Caco-2 (cell line): ENCODE measurements at regions of chr5 and their contacts with region 1.

Region 1: GRCh38 chr5:5492087-5492933 is 69.8 kb downstream of the ICE1 start:
- DNase-seq: peak; percentile 46 to 49
- H3K4me3 ChIP-seq: no peak overlapping the region
- H3K4me3 Mint-ChIP-seq: no peak overlapping the region
- H3K27ac Mint-ChIP-seq: no peak overlapping the region
- H3K4me1 ChIP-seq: no peaks in the 10 kb centered on the region
- H3K4me1 Mint-ChIP-seq: no peaks in the 10 kb centered on the region
- H3K27me3 ChIP-seq: no peaks in the 10 kb centered on the region
- H3K27me3 Mint-ChIP-seq: no peaks in the 10 kb centered on the region
- CTCF ChIP-seq: peak; percentile 59 to 77

Region 2: GRCh38 chr5:5523066-5523505 is 30.8 kb after region 1 on chr5:
- CTCF ChIA-PET with region 1: no interaction called
- POLR2A ChIA-PET with region 1: no interaction called
- intact Hi-C with region 1: no loop called
- DNase-seq: peak in 1 of 2 experiments; percentile 25
- H3K4me3 ChIP-seq: no peak overlapping the region
- H3K4me3 Mint-ChIP-seq: no peak overlapping the region
- H3K27ac Mint-ChIP-seq: peak overlapping the region; percentile 70
- H3K4me1 ChIP-seq: peaks cover 19% of the 10 kb centered on the region
- H3K4me1 Mint-ChIP-seq: peaks cover 16% of the 10 kb centered on the region
- H3K27me3 ChIP-seq: no peaks in the 10 kb centered on the region
- H3K27me3 Mint-ChIP-seq: no peaks in the 10 kb centered on the region
- CTCF ChIP-seq: no peak

Region 3: DNA sequence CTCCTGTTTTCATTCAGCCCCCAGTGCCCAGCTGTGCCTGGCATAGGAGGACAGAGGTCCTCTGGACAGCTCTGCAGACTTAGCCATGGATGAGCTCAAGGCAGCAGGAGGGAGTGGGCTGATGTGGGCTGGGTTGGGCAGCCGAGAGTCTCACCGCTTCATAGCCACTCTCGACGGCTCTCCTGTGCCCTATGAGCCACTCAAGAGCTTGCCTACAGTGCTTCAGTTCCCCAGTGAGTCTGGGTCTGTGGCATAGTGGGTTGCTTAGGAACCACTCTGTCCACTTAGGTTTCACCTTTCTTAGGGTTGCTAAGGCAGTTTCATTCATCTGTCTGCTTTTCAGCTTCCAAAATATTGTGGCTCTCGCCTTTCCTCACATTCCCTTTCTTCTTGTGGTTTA is 227.0 kb after region 1 on chr5:
- CTCF ChIA-PET with region 1: no interaction called
- POLR2A ChIA-PET with region 1: no interaction called
- intact Hi-C with region 1: loop called (anchors 10 kb)
- DNase-seq: no peak
- H3K4me3 ChIP-seq: no peak overlapping the region
- H3K4me3 Mint-ChIP-seq: no peak overlapping the region
- H3K27ac Mint-ChIP-seq: no peak overlapping the region
- H3K4me1 ChIP-seq: no peaks in the 10 kb centered on the region
- H3K4me1 Mint-ChIP-seq: no peaks in the 10 kb centered on the region
- H3K27me3 ChIP-seq: no peaks in the 10 kb centered on the region
- H3K27me3 Mint-ChIP-seq: peaks cover 3% of the 10 kb centered on the region
- CTCF ChIP-seq: no peak

Region 4: GRCh38 chr5:5738797-5739489 is 246.6 kb after region 1 on chr5:
- CTCF ChIA-PET with region 1: no interaction called
- POLR2A ChIA-PET with region 1: no interaction called
- intact Hi-C with region 1: no loop called
- DNase-seq: no peak
- H3K4me3 ChIP-seq: no peak overlapping the region
- H3K4me3 Mint-ChIP-seq: no peak overlapping the region
- H3K27ac Mint-ChIP-seq: no peak overlapping the region
- H3K4me1 ChIP-seq: no peaks in the 10 kb centered on the region
- H3K4me1 Mint-ChIP-seq: no peaks in the 10 kb centered on the region
- H3K27me3 ChIP-seq: no peaks in the 10 kb centered on the region
- H3K27me3 Mint-ChIP-seq: peaks cover 10% of the 10 kb centered on the region
- CTCF ChIP-seq: no peak

Region 5: DNA sequence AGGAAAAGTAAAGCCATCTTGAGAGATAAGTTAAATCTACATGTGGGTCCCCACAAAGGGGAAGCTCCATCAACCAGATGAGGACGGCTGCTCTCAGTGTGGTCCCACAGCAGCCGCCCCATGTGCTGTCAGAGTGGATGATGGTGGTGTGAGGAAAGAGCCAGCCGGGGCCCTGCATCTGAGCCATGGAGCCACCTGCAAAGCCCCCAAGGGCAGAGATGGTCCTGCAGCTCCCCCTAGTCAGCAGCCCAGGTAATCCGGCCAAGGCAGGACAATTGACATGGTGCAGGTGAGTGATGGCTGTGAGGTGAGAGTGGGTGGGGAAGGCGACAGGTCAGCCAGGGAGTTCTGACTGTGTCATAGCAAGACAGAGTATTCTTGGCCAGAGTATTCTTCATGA is 389.0 kb after region 1 on chr5:
- CTCF ChIA-PET with region 1: no interaction called
- POLR2A ChIA-PET with region 1: no interaction called
- intact Hi-C with region 1: loop called (anchors 5 kb)
- DNase-seq: peak in 1 of 2 experiments; percentile 2
- H3K4me3 ChIP-seq: no peak overlapping the region
- H3K4me3 Mint-ChIP-seq: no peak overlapping the region
- H3K27ac Mint-ChIP-seq: no peak overlapping the region
- H3K4me1 ChIP-seq: no peaks in the 10 kb centered on the region
- H3K4me1 Mint-ChIP-seq: peaks cover 7% of the 10 kb centered on the region
- H3K27me3 ChIP-seq: no peaks in the 10 kb centered on the region
- H3K27me3 Mint-ChIP-seq: peaks cover 20% of the 10 kb centered on the region
- CTCF ChIP-seq: no peak

Region 6: GRCh38 chr5:6273090-6273735 is 780.9 kb after region 1 on chr5:
- CTCF ChIA-PET with region 1: no interaction called
- POLR2A ChIA-PET with region 1: no interaction called
- intact Hi-C with region 1: loop called (anchors 10 kb)
- DNase-seq: no peak
- H3K4me3 ChIP-seq: no peak overlapping the region
- H3K4me3 Mint-ChIP-seq: no peak overlapping the region
- H3K27ac Mint-ChIP-seq: no peak overlapping the region
- H3K4me1 ChIP-seq: no peaks in the 10 kb centered on the region
- H3K4me1 Mint-ChIP-seq: no peaks in the 10 kb centered on the region
- H3K27me3 ChIP-seq: no peaks in the 10 kb centered on the region
- H3K27me3 Mint-ChIP-seq: peaks cover 14% of the 10 kb centered on the region
- CTCF ChIP-seq: no peak